CD8-positive, alpha-beta T cell (primary cell): ENCODE measurements at regions of chr11 and their contacts with region 1.

Region 1: DNA sequence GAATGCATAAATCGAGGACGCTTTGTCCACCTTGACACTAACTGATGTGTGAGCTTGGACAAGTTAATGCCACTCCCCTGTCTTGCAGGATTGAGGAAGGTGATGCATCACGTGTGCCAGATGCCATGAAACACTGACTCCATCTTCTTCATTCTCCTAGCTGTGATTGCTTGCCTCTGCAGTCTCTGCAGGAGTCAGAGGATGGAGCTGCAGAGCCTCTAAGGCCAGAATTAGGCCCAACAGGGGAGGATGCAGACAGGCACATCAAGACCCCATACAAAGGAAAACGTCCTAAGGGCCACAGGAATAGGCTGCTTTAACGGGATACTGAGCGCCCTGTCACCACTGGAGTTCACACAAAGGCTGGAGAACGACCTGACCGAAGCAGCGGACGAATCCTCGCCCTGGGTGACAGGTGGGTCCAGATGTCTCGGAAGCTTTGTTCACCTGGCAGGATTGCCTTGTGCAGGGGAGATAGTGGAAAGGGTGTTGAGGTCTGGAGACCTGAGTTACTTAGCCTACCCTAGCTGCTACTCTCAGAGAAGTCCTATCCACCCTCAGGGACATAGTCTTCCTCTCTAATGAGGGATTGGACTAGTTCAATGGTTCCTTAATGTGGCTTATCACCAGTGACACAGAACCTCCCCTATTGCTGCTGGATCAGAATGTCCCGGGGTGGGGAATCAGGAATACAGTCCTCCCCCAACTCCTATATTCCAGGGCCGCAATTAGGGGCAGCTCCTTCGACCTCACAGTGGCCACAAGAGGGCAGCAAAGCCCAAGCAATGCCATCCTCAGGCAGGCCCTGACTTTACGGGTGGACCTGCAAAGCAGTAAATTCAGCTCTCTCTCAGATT is 32.4 kb downstream of the DBX1 start:
- DNase-seq: peak; percentile 44 to 84 (median 73)
- ATAC-seq: peak; percentile 71
- H3K4me3 ChIP-seq: no peak overlapping the region
- H3K4me3 Mint-ChIP-seq: no peak overlapping the region
- H3K27ac ChIP-seq: no peak overlapping the region
- H3K27ac Mint-ChIP-seq: no peak overlapping the region
- H3K4me1 ChIP-seq: peaks cover 6% of the 10 kb centered on the region
- H3K4me1 Mint-ChIP-seq: peaks cover 8% of the 10 kb centered on the region
- H3K27me3 ChIP-seq: no peaks in the 10 kb centered on the region
- H3K27me3 Mint-ChIP-seq: peaks cover 14% of the 10 kb centered on the region
- CTCF ChIP-seq: peak; percentile 80

Region 2: DNA sequence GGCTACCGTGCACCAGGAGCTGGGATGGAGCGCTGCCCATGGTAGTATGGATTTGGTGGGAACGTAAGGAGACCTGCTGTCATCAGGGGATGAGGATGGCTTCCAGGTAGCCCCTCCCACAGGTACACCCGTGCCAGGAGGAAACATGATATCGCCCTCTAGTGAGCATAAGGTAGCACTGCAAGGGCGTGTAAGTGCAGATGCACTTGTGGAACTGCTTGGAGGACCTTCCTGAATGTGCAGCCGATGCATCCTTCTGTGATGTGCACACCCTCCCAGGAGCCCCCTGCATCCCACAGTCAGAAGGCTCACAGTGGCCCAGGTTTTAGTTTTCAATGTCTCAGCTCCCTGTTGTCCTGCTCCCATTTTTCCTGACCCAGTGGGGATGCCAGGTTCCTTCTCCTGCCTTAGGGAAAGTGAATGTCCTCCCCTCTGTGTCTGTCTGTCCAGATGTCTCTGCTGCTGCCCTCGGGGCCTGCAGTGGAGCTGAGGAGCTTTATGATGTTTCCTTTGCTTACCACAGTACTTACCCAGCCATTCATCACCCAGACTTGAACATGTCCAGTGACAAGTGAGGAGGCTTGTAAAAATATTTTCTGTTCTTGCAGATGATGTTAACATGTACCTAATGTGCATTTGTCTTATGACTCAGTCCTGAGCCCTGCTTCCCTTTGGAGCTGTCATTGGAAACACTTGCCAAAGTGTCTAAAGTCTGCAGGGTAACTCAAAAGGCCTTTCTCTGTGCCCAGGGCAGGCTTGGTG is 16.8 kb before region 1 on chr11:
- CTCF ChIA-PET with region 1: interaction called, 33 read pairs
- POLR2A ChIA-PET with region 1: no interaction called
- intact Hi-C with region 1: no loop called
- DNase-seq: peak in 7 of 9 experiments; percentile 1 to 69 (median 34)
- ATAC-seq: peak; percentile 80
- H3K4me3 ChIP-seq: no peak overlapping the region
- H3K4me3 Mint-ChIP-seq: no peak overlapping the region
- H3K27ac ChIP-seq: no peak overlapping the region
- H3K27ac Mint-ChIP-seq: no peak overlapping the region
- H3K4me1 ChIP-seq: no peaks in the 10 kb centered on the region
- H3K4me1 Mint-ChIP-seq: no peaks in the 10 kb centered on the region
- H3K27me3 ChIP-seq: no peaks in the 10 kb centered on the region
- H3K27me3 Mint-ChIP-seq: peaks cover 8% of the 10 kb centered on the region
- CTCF ChIP-seq: peak; percentile 43

Region 3: GRCh38 chr11:20337526-20338154 is 209.7 kb after region 1 on chr11:
- CTCF ChIA-PET with region 1: interaction called, 9 read pairs
- POLR2A ChIA-PET with region 1: no interaction called
- intact Hi-C with region 1: loop called in 1 of 2 experiments (anchors 5 kb)
- DNase-seq: peak in 1 of 9 experiments; percentile 18
- ATAC-seq: no peak
- H3K4me3 ChIP-seq: no peak overlapping the region
- H3K4me3 Mint-ChIP-seq: no peak overlapping the region
- H3K27ac ChIP-seq: no peak overlapping the region
- H3K27ac Mint-ChIP-seq: no peak overlapping the region
- H3K4me1 ChIP-seq: no peaks in the 10 kb centered on the region
- H3K4me1 Mint-ChIP-seq: peaks cover 5% of the 10 kb centered on the region
- H3K27me3 ChIP-seq: peaks cover 5 to 7% of the 10 kb centered on the region in 2 experiments
- H3K27me3 Mint-ChIP-seq: peaks cover 43% of the 10 kb centered on the region
- CTCF ChIP-seq: no peak

Region 4: GRCh38 chr11:20363500-20364411 is 235.9 kb after region 1 on chr11 and contains the start of gene HTATIP2:
- CTCF ChIA-PET with region 1: interaction called, 27 read pairs
- POLR2A ChIA-PET with region 1: no interaction called
- intact Hi-C with region 1: no loop called
- DNase-seq: peak; percentile 52 to 88 (median 74)
- ATAC-seq: peak; percentile 86
- H3K4me3 ChIP-seq: peak within 1 kb of the TSS; percentile 79 to 82
- H3K4me3 Mint-ChIP-seq: peak within 1 kb of the TSS; percentile 92
- H3K27ac ChIP-seq: peak within 1 kb of the TSS; percentile 68 to 69
- H3K27ac Mint-ChIP-seq: peak within 1 kb of the TSS; percentile 94
- H3K4me1 ChIP-seq: peaks cover 33% of the 10 kb centered on the region
- H3K4me1 Mint-ChIP-seq: peaks cover 66% of the 10 kb centered on the region
- H3K27me3 ChIP-seq: no peaks in the 10 kb centered on the region
- H3K27me3 Mint-ChIP-seq: no peaks in the 10 kb centered on the region
- CTCF ChIP-seq: no peak
- total RNA-seq, gene HTATIP2: 6.6 to 7.5 TPM

Region 5: DNA sequence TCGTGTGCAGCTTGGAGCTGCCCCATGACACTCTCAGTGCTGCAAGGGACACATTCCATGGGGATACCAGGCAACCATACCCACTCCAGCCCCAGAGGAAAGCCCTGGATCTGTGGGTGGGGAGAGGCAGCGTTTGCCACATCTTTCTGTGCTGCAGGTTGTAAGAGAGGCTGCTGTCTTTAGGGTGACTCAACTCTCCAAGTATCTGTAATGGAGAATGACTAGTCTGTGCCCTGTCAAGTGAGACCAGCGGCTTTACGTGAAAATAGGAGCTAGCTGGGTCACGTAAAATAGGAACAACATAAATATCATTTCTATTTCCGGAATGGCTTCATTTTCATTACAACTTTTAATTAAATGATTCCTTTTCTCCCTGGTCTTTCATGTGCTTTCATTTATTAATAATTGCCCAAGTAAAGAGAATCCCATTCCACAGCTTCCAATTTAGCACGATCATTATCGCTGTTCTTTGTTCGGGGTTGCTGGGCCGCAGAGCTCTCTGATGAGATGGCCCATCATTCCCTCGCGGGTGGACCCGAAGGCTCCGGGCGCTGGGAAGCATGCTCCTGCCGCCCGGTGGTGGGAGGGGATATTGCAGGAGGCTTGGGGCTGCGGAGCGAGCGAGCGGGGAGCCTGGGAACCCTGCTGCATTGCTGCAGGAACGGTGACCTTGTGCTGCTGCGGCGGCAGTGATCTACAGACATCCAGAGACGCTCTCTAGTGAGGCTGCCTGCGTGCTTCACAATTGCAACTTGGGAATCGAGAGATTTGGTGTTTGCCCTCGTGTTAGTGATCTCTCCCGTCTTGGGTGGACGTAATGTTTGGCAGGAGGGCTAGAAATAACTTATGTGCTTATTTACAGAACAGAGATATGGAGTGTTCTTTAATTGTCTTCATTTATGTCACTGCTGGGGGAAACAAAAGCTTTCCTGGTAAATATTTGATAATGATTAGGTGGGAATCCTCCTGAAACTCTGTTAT is 482.1 kb after region 1 on chr11:
- CTCF ChIA-PET with region 1: interaction called, 16 read pairs
- POLR2A ChIA-PET with region 1: no interaction called
- intact Hi-C with region 1: loop called in 1 of 2 experiments (anchors 1 kb)
- DNase-seq: peak; percentile 17 to 65 (median 40)
- ATAC-seq: peak; percentile 59
- H3K4me3 ChIP-seq: no peak overlapping the region
- H3K4me3 Mint-ChIP-seq: peak overlapping the region; percentile 54
- H3K27ac ChIP-seq: no peak overlapping the region
- H3K27ac Mint-ChIP-seq: no peak overlapping the region
- H3K4me1 ChIP-seq: no peaks in the 10 kb centered on the region
- H3K4me1 Mint-ChIP-seq: peaks cover 7% of the 10 kb centered on the region
- H3K27me3 ChIP-seq: peaks cover 3 to 14% of the 10 kb centered on the region in 2 experiments
- H3K27me3 Mint-ChIP-seq: peaks cover 72% of the 10 kb centered on the region
- CTCF ChIP-seq: peak; percentile 64

Region 6: GRCh38 chr11:20623252-20623651 is 495.4 kb after region 1 on chr11:
- CTCF ChIA-PET with region 1: no interaction called
- POLR2A ChIA-PET with region 1: no interaction called
- intact Hi-C with region 1: no loop called
- DNase-seq: no peak
- ATAC-seq: no peak
- H3K4me3 ChIP-seq: no peak overlapping the region
- H3K4me3 Mint-ChIP-seq: no peak overlapping the region
- H3K27ac ChIP-seq: no peak overlapping the region
- H3K27ac Mint-ChIP-seq: no peak overlapping the region
- H3K4me1 ChIP-seq: no peaks in the 10 kb centered on the region
- H3K4me1 Mint-ChIP-seq: no peaks in the 10 kb centered on the region
- H3K27me3 ChIP-seq: no peaks in the 10 kb centered on the region
- H3K27me3 Mint-ChIP-seq: peaks cover 21% of the 10 kb centered on the region
- CTCF ChIP-seq: no peak

Region 7: GRCh38 chr11:21511835-21512440 is 1384.0 kb after region 1 on chr11:
- CTCF ChIA-PET with region 1: no interaction called
- POLR2A ChIA-PET with region 1: no interaction called
- intact Hi-C with region 1: loop called in 1 of 2 experiments (anchors 10 kb)
- DNase-seq: peak in 3 of 9 experiments; percentile 6 to 14 (median 12)
- ATAC-seq: no peak
- H3K4me3 ChIP-seq: no peak overlapping the region
- H3K4me3 Mint-ChIP-seq: no peak overlapping the region
- H3K27ac ChIP-seq: no peak overlapping the region
- H3K27ac Mint-ChIP-seq: no peak overlapping the region
- H3K4me1 ChIP-seq: no peaks in the 10 kb centered on the region
- H3K4me1 Mint-ChIP-seq: no peaks in the 10 kb centered on the region
- H3K27me3 ChIP-seq: no peaks in the 10 kb centered on the region
- H3K27me3 Mint-ChIP-seq: no peaks in the 10 kb centered on the region
- CTCF ChIP-seq: no peak